SK-N-SH (cell line): ENCODE measurements at regions of chr7 and their contacts with region 1.

Region 1: DNA sequence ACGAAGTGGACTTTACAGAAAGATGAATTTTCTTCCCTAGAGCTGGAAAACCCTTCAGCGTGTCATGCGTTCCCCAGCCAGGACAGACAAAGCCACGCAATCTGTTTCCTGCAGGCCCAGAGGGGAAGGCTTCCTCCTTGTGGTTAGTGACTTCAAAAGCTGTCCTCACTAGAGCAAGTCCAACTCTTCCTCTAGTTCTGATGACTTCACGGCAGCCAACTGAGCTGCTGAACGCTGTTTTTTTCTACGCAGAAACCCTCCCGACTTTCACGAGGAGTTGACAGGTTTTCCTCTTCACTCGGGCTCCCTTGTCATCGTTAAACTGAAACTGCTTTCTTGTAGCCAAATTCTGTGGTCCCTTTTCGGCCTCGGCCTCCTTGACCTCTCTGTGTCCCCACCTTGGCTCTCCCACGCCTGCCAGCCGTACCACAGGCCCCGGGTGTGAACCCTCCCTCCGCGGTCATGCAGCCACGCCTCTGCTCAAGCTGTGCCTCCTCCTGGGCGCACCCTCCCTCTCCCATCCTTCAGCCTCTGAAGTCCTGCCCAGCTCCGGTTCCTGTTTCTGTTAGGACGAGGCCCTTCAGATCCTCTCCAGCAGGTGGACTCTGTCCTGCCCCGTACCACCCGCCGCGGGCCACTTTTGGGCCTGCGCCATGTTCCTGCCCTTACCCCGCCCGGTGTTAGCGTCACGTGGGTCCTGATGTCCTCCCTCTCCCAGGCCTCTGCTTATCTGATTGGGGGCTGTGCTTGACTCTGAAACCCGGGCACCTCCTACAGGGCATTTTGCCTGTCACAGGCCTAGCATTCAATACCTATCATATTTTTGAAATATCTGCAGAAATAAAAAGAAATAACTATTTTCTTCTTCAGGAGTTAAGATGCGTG is 39.3 kb downstream of the CUX1 start:
- DNase-seq: peak; percentile 98
- H3K4me3 ChIP-seq: peak overlapping the region; percentile 37 to 54
- H3K27ac ChIP-seq: peak overlapping the region; percentile 86 to 87
- H3K4me1 ChIP-seq: peaks cover 15 to 18% of the 10 kb centered on the region in 2 experiments
- H3K27me3 ChIP-seq: no peaks in the 10 kb centered on the region
- CTCF ChIP-seq: peak; percentile 68
- EP300 ChIP-seq: peak in 1 of 2 experiments; percentile 78; a peak in 2 of 4 replicates
- RAD21 ChIP-seq: peak; percentile 77

Region 2: GRCh38 chr7:101688183-101688831 is 168.4 kb before region 1 on chr7:
- CTCF ChIA-PET with region 1: interaction called, 12 read pairs
- POLR2A ChIA-PET with region 1: no interaction called
- DNase-seq: peak; percentile 98
- H3K4me3 ChIP-seq: peak overlapping the region; percentile 14 to 53; a peak in 3 of 4 replicates
- H3K27ac ChIP-seq: no peak overlapping the region
- H3K4me1 ChIP-seq: peaks cover 0 to 6% of the 10 kb centered on the region in 2 experiments; a peak in 1 of 4 replicates
- H3K27me3 ChIP-seq: no peaks in the 10 kb centered on the region
- CTCF ChIP-seq: peak; percentile 95
- EP300 ChIP-seq: no peak
- RAD21 ChIP-seq: peak; percentile 92

Region 3: GRCh38 chr7:101823096-101823495 is 33.6 kb before region 1 on chr7:
- CTCF ChIA-PET with region 1: interaction called, 16 read pairs
- POLR2A ChIA-PET with region 1: no interaction called
- DNase-seq: no peak
- H3K4me3 ChIP-seq: no peak overlapping the region
- H3K27ac ChIP-seq: no peak overlapping the region
- H3K4me1 ChIP-seq: peaks cover 18 to 35% of the 10 kb centered on the region in 2 experiments; a peak in 3 of 4 replicates
- H3K27me3 ChIP-seq: no peaks in the 10 kb centered on the region
- CTCF ChIP-seq: no peak
- EP300 ChIP-seq: no peak
- RAD21 ChIP-seq: no peak

Region 4: DNA sequence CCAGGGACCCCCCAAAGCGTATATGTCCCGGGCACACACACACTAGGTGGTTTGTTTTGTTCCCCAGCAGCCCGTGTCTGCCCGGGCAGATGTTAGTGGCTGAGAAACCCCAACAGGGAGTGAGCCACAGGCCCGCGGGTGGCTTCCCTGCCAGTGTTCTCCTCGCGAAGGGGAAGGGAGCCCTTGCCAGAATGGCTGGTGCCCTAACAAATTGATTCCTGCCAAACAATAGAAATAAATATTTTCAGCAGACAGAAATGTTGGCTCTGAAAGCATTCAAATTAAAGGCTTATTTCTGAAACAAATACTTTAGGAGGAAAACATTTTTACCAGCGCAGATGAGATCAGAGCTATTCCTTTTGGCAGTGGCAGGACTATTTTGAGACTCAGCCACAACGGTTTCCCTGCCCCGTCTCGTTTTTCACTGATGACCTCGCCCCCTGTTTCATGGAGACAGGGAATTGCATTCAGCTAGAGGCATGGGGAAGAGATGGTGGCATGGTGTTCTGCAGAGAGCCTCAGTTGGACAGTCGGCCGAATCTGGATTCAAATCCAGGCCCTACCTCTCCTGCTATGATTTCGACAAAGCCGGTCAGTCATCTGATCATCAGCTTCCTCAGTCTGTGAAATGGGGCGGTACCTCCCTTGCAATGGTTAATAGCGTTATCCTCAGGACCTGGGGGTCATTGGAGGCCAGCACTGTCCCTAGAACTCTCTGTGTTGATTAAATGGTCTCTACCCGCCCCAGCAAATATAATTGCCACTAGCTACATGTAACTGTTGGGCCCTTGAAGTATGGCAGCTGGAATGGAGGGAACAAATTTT is 45.2 kb after region 1 on chr7:
- CTCF ChIA-PET with region 1: interaction called, 16 read pairs
- POLR2A ChIA-PET with region 1: no interaction called
- DNase-seq: no peak
- H3K4me3 ChIP-seq: no peak overlapping the region
- H3K27ac ChIP-seq: no peak overlapping the region
- H3K4me1 ChIP-seq: peaks cover 17 to 20% of the 10 kb centered on the region in 2 experiments; a peak in 3 of 4 replicates
- H3K27me3 ChIP-seq: no peaks in the 10 kb centered on the region
- CTCF ChIP-seq: no peak
- EP300 ChIP-seq: no peak
- RAD21 ChIP-seq: no peak

Region 5: GRCh38 chr7:102236592-102237287 is 380.0 kb after region 1 on chr7:
- CTCF ChIA-PET with region 1: interaction called, 31 read pairs
- POLR2A ChIA-PET with region 1: no interaction called
- DNase-seq: peak; percentile 95
- H3K4me3 ChIP-seq: no peak overlapping the region
- H3K27ac ChIP-seq: no peak overlapping the region; a peak in 1 of 4 replicates
- H3K4me1 ChIP-seq: peaks cover 0 to 2% of the 10 kb centered on the region in 2 experiments; a peak in 1 of 4 replicates
- H3K27me3 ChIP-seq: no peaks in the 10 kb centered on the region
- CTCF ChIP-seq: peak; percentile 97
- EP300 ChIP-seq: no peak
- RAD21 ChIP-seq: peak; percentile 99